Left ventricle myocardium superior (tissue), 1 donor: ENCODE measurements at regions of chr13 and their contacts with region 1.

Region 1: DNA sequence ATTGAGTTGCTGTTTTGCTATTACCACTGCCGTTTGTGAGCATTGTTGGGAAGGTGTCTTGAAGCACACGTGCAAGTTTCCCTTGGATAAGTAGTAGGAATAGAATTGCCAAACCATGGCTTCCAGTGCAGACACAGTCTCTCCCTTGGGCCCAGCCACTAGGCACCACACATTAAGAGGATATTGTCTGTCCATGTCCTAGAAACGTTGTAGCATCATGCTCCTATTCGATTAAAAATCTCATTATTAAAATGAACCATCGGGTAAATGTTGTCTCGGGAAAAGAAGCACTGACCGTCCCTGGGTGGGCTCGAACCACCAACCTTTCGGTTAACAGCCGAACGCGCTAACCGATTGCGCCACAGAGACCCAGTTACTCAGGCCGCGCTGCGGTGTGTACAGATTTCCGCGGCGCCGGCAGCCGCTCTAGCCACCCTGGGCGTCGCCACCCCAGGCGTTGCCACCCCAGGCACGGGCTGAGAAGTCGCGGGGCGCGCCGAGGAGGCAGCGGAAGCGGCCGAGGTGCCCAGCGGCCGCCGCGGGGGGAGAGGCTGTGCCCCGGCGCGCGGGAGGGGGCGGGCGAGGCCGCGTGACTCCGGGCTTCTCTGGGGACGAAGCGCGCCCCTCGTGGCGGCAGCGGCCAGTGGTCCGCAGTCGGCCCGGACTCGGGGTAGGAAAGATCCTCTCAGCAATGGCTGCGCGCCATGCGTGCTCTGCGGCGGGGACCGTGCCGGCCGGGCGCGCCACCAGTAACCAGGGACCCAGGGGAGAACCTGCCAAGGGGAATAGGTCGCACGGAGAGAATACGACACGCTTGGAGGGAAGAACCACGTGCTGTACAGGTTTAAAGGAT is 56.2 kb downstream of the USPL1 start:
- DNase-seq: peak; percentile 92
- ATAC-seq: peak; percentile 96

Region 2: GRCh38 chr13:30865123-30866049 is 191.5 kb after region 1 on chr13:
- intact Hi-C with region 1: loop called (anchors 10 kb)
- DNase-seq: peak; percentile 82
- ATAC-seq: peak; percentile 84